Panc1 (cell line): ENCODE measurements at regions of chr21 and their contacts with region 1.

Region 1: GRCh38 chr21:44267655-44268142 is 6.0 kb upstream of the DNMT3L start:
- DNase-seq: no peak
- ATAC-seq: peak; percentile 60; the same call in 1 of the 2 replicates
- H3K4me3 ChIP-seq: no peak overlapping the region
- H3K27ac ChIP-seq: no peak overlapping the region
- H3K4me1 ChIP-seq: no peaks in the 10 kb centered on the region
- H3K27me3 ChIP-seq: no peaks in the 10 kb centered on the region
- CTCF ChIP-seq: no peak; the same call in 1 of the 2 replicates

Region 2: GRCh38 chr21:44255519-44255981 is 12.1 kb before region 1 on chr21:
- CTCF ChIA-PET with region 1: no interaction called
- POLR2A ChIA-PET with region 1: interaction called, 16 read pairs
- in situ Hi-C with region 1: no loop called
- intact Hi-C with region 1: no loop called
- DNase-seq: no peak
- ATAC-seq: no peak
- H3K4me3 ChIP-seq: no peak overlapping the region
- H3K27ac ChIP-seq: no peak overlapping the region
- H3K4me1 ChIP-seq: no peaks in the 10 kb centered on the region
- H3K27me3 ChIP-seq: no peaks in the 10 kb centered on the region
- CTCF ChIP-seq: no peak

Region 3: DNA sequence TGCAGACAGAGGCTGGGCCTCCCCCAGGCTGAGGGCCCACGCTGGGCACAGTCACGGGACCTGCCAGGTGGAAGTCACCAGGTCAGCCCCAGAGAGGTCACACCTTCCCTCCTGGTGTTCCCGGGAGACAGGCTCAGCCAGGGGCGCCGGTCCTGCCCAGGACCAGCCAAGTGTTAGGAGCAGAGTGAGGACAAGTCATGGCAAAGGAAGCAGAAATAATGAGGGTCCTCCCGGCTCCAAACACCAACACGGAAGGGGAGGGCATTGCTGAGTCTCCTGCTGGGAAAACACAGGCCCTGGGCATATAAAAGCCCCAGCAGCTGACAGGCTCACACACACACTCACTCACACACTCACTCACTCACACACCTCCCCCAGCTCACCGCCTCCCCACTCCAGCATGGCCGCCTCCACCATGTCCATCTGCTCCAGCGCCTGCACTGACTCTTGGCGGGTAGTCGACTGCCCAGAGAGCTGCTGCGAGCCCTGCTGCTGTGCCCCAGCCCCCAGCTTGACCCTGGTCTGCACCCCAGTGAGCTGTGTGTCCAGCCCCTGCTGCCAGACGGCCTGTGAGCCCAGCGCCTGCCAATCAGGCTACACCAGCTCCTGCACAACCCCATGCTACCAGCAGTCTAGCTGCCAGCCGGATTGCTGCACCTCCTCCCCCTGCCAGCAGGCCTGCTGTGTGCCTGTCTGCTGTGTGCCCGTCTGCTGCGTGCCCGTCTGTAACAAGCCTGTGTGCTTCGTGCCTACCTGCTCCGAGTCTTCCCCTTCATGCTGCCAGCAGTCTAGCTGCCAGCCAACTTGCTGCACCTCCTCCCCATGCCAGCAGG is 369.5 kb after region 1 on chr21 and contains the start of gene KRTAP10-10:
- CTCF ChIA-PET with region 1: no interaction called
- POLR2A ChIA-PET with region 1: no interaction called
- in situ Hi-C with region 1: no loop called
- intact Hi-C with region 1: no loop called
- DNase-seq: no peak
- ATAC-seq: peak; percentile 60
- H3K4me3 ChIP-seq: no peak within 1 kb of the TSS
- H3K27ac ChIP-seq: no peak within 1 kb of the TSS
- H3K4me1 ChIP-seq: no peaks in the 10 kb centered on the region
- H3K27me3 ChIP-seq: no peaks in the 10 kb centered on the region
- CTCF ChIP-seq: no peak
- total RNA-seq, gene KRTAP10-10: not detected